ENCODE measurements at regions of chr3 and their contacts with region 1.

Region 1: DNA sequence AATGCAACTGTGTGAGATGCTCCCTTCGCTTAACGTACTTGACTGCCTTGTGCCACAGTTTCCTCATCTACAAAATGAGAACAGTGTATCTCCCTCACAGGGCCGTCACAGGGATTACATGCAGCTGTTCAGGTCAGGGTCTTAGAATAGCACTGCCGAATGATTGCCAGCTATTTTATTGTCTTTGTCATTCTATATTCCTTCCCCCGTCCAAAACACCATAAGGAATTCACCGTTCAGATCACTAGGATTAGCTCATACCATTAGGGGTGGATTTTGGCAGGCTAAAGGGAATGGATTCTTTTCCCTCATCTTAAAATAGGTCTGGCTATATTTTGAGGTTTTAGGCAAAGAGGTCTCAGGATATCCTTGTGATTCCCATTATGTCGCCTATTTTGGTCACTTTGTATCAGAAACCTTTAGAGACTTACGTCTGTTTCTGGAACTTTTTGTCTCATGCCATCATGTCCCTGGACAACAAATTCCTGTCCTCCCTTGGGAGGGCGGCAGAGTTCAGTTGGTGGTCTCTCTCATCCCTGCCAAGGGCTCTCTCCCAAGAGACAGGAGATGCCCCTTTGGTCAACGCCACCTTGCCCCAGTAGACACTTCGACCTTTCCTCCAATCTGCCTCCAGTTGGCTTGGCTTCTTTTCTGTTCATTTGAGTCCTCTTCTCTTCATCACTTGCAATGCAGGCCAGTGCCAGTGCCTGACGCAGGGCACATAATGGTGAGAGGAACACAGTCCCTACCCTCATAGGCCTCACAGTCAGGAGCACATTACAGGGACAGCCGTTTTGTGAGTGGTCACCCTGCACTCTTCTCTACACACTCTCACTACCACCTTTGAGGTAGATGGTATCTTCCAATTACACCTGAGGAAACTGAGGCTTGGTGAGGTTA is 171.6 kb upstream of the BHLHE40 start:
- DNase-seq: peak in 1 of 2 donors; percentile 80
- H3K4me3 ChIP-seq: no peak overlapping the region
- H3K27ac ChIP-seq: peak overlapping the region; percentile 81
- H3K4me1 ChIP-seq: peaks cover 0 to 50% (median 18%) of the 10 kb centered on the region in 4 donors
- H3K27me3 ChIP-seq: no peaks in the 10 kb centered on the region
- CTCF ChIP-seq: no peak

Region 2: DNA sequence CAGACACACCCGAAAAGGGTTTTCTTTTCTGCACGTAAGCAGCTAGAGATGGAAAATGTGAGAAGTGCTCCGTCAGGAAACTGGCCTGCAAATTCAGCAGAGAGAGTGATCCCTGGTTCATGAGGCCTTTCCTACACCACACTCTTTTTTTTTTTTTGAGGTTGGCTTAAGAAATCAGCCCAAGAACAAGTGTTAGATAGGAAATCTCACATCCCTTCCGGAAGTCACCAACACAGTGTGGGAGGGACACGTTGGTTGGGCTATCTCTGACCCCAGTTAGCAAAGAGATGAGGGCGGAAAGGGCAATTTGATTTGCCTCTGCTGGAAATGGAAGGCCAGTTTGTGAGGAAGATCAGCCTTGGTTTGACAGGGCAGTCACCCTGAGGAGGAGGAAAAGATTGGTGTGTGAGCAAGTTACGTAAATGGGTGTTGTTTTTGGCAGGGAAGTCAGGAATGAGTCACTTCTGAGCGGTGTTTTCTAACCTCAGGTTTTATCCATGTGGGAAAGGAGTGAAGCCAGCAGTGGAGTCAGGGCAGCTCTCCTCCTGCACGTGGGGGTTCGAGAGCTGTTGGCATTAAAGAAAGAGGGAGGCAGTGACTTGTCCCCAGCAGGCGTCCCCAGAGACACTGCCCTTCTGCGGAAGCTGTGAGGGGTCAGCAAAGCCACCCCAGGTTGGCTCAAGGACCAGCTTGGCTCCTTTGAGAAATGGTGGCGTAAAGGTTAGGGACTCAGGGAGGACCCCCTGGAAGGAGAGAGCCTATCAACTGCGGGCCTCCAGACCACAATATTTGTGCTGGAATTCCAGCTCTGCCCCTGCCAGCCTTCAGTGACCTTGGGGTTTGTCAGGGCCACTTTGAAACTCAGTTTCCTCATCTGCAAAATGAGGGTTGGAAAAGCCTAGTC is 66.0 kb before region 1 on chr3:
- intact Hi-C with region 1: loop called (anchors 10 kb)
- DNase-seq: peak; percentile 79 to 92
- H3K4me3 ChIP-seq: no peak overlapping the region
- H3K27ac ChIP-seq: peak overlapping the region; percentile 86 to 92
- H3K4me1 ChIP-seq: peaks cover 5 to 45% (median 31%) of the 10 kb centered on the region in 4 donors
- H3K27me3 ChIP-seq: no peaks in the 10 kb centered on the region
- CTCF ChIP-seq: no peak

Region 3: DNA sequence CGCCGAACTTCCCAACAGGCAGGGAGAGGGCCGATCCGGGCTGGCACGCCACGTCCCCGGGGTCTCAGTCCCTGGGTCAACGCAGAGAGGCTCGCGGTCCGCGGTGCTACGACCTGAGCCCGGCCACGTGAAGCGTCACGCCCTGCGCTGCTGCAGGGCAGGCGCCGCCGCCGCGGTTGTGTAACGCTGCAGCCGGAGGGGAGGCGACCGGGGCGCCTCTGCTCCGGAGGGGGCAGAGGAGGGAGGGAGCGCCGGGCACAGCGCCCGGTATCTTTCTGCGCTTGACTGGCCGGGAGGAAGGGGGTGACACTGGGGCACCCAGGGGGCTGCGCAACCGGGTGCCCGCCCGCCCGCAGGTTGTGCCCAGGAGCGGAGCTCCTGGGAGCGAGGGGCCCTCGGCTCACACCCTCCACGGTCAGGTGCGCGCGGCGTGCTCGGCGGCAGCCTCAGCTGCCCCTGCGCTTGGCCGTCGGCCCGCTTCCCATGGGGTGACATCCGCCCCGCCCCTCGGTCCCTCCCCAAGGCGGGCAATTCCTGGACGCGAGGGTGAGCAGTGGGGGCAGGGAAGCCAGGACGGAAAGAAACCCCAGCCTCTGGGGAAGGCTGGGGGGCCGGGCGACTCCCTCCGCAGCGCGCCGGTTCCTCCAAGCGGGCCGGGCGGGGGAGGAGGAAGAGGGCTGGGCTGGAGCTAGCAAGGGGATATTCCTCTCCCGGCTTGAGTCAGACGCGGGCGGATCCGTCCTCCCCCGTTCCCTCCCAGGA is 170.8 kb after region 1 on chr3:
- intact Hi-C with region 1: loop called (anchors 2 kb)
- DNase-seq: peak; percentile 97 to 99
- H3K4me3 ChIP-seq: peak overlapping the region; percentile 60 to 85
- H3K27ac ChIP-seq: peak overlapping the region; percentile 95 to 99
- H3K4me1 ChIP-seq: peaks cover 0 to 45% (median 33%) of the 10 kb centered on the region in 4 donors
- H3K27me3 ChIP-seq: no peaks in the 10 kb centered on the region
- CTCF ChIP-seq: no peak

Region 4: GRCh38 chr3:6062261-6063187 is 1254.9 kb after region 1 on chr3:
- intact Hi-C with region 1: no loop called
- DNase-seq: no peak
- H3K4me3 ChIP-seq: no peak overlapping the region
- H3K27ac ChIP-seq: no peak overlapping the region
- H3K4me1 ChIP-seq: no peaks in the 10 kb centered on the region
- H3K27me3 ChIP-seq: no peaks in the 10 kb centered on the region
- CTCF ChIP-seq: no peak

Measured in tibial artery (tissue), 4 donors.